GM10248 (cell line): ENCODE measurements at regions of chr3 and their contacts with region 1.

Region 1: DNA sequence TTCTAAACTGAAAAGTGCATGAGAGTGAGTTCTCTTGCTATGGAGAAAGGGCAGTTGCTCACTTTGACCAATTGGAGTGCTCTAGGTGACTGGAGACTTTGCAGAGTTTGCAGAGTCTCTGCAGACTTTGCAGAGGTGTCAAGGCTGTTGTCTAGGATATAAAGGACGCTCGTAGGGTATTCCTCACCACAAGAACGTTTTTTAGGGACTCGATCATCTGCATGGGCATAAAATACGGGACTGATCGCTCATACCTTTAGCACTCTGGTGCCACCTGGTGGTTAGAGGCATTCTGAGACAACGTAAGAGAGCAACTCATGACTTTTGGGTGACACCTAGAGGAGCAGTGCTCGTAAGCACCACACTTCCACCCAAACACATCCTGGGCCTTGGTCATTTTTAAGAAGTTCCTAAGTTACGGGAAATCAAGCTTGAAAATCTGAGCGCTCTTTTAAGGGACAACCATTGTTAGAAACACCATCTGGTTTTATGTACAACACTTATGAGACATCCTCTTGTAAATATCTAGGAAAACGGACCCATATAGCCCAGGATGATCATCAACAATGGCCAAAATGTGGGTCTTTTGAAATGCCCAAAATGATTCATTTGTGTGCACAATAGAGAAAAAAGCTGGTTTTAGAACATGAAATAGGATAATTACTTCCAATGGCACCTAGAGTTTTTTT is 51.6 kb upstream of the XCR1 start:
- DNase-seq: peak; percentile 72
- CTCF ChIP-seq: peak; percentile 98

Region 2: DNA sequence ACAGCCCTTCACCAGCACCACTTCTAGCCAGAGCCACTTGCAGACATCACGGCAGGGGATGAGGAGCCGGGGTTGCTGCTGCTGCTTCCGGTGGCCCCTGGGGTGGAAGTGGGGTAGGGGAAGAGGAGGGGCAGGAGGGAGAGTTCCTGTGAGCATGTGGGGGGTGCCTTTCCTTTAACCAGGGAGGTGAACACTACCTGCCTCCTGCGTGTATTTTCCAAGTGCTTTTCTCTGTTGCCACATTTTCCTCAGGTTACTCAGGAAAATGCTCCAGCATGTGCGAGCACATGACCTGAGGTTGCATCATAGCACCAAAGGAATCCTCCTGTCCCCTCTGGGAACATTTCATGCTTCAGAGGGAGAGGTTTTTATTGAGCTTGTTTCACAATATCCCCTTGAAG is 401.8 kb before region 1 on chr3:
- CTCF ChIA-PET with region 1: no interaction called
- POLR2A ChIA-PET with region 1: no interaction called
- DNase-seq: no peak
- CTCF ChIP-seq: no peak

Region 3: GRCh38 chr3:45760878-45761711 is 317.8 kb before region 1 on chr3:
- CTCF ChIA-PET with region 1: interaction called, 45 read pairs
- POLR2A ChIA-PET with region 1: no interaction called
- DNase-seq: peak; percentile 88
- CTCF ChIP-seq: peak; percentile 80

Region 4: GRCh38 chr3:45948311-45948781 is 130.5 kb before region 1 on chr3:
- CTCF ChIA-PET with region 1: interaction called, 377 read pairs
- POLR2A ChIA-PET with region 1: no interaction called
- DNase-seq: no peak
- CTCF ChIP-seq: no peak

Region 5: GRCh38 chr3:45986303-45986982 is 92.4 kb before region 1 on chr3:
- CTCF ChIA-PET with region 1: interaction called, 22 read pairs
- POLR2A ChIA-PET with region 1: no interaction called
- DNase-seq: no peak
- CTCF ChIP-seq: no peak

Region 6: DNA sequence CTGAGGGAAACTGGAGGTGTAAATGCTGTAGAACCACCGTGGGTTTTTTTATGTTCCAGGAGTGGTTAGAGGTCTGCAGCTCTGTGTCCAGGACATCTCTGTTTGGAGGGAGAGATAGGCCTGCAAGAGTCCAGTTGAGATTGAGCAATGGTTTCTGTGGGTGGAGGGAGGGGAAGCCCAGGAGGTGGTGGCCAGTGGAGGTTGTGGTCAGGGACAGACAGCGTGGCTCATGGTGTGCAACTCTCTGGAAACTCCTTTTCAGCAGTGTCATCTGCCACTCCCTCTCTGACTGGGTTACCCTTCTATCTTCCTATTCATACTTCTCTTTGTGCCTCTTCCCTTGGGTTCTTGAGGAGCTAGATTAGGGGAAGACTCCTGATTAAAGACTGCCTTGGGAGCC is 61.1 kb before region 1 on chr3:
- CTCF ChIA-PET with region 1: interaction called, 15 read pairs
- POLR2A ChIA-PET with region 1: no interaction called
- DNase-seq: no peak
- CTCF ChIP-seq: no peak

Region 7: GRCh38 chr3:46089237-46090011 is 10.6 kb after region 1 on chr3:
- CTCF ChIA-PET with region 1: interaction called, 165 read pairs
- POLR2A ChIA-PET with region 1: no interaction called
- DNase-seq: peak; percentile 71
- CTCF ChIP-seq: no peak